Activated CD4-positive, alpha-beta T cell treated with anti-CD3 and anti-CD28 coated beads for 36 hours (primary cell): ENCODE measurements at regions of chr19 and their contacts with region 1.

Region 1: DNA sequence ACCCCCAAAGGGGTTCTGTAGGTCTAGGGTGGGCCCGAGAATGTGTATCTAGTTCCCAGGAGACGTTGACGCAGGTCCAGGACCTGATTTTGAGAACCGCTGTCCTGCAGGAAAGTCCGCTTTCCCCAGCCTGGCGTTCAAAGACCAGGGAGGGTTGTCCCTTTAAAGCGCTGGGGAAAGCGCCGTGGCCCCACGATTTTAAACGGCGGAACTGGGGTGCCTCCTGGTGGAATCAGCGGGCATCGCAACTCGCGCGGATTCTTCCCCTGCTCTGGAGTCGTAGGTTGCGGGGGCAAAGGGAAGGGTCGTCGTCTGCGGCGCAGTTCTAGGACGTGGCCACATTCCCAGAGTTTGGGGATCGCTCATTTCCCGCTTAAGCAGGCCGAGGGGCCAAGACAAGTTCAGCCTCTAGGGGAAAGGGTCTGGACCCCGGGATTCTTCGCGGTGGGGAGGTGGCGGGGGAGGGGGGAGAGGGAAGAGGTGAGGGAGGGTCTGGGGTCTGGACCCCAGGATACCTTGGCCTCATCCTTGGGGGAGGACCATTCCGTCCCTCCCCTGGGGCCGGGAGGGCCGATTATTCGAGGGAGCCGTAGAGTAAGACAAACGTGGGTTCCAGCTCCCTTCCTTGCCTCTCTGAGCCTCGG is 7.7 kb downstream of the PNMA8B start:
- DNase-seq: peak; percentile 86
- ATAC-seq: peak; percentile 68
- H3K4me3 Mint-ChIP-seq: no peak overlapping the region
- H3K27ac Mint-ChIP-seq: no peak overlapping the region
- H3K4me1 Mint-ChIP-seq: peaks cover 11% of the 10 kb centered on the region
- H3K27me3 Mint-ChIP-seq: peaks cover 61% of the 10 kb centered on the region

Region 2: GRCh38 chr19:46404055-46404752 is 83.7 kb before region 1 on chr19:
- CTCF ChIA-PET with region 1: interaction called, 11 read pairs
- POLR2A ChIA-PET with region 1: interaction called, 3 read pairs
- intact Hi-C with region 1: loop called (anchors 1 kb)
- DNase-seq: no peak
- ATAC-seq: no peak
- H3K4me3 Mint-ChIP-seq: no peak overlapping the region
- H3K27ac Mint-ChIP-seq: no peak overlapping the region
- H3K4me1 Mint-ChIP-seq: peaks cover 17% of the 10 kb centered on the region
- H3K27me3 Mint-ChIP-seq: peaks cover 60% of the 10 kb centered on the region